ENCODE measurements at regions of chr15 and their contacts with region 1.

Region 1: GRCh38 chr15:94119923-94120775 is 111.2 kb upstream of the MCTP2 start:
- DNase-seq: peak; percentile 23 to 54
- H3K4me3 ChIP-seq: no peak overlapping the region
- H3K27ac ChIP-seq: no peak overlapping the region
- H3K4me1 ChIP-seq: peaks cover 0 to 5% (median 2%) of the 10 kb centered on the region in 4 experiments; a peak in 4 of 7 replicates
- H3K27me3 ChIP-seq: no peaks in the 10 kb centered on the region
- CTCF ChIP-seq: peak; percentile 23 to 100 (median 98)
- EP300 ChIP-seq: no peak
- POLR2A ChIP-seq: no peak
- RAD21 ChIP-seq: peak; percentile 100

Region 2: GRCh38 chr15:93030430-93031105 is 1089.6 kb before region 1 on chr15:
- CTCF ChIA-PET with region 1: interaction called, 77 read pairs
- POLR2A ChIA-PET with region 1: no interaction called
- DNase-seq: peak; percentile 56 to 90
- H3K4me3 ChIP-seq: no peak overlapping the region
- H3K27ac ChIP-seq: no peak overlapping the region
- H3K4me1 ChIP-seq: peaks cover 0 to 3% (median 0%) of the 10 kb centered on the region in 4 experiments; a peak in 3 of 7 replicates
- H3K27me3 ChIP-seq: no peaks in the 10 kb centered on the region
- CTCF ChIP-seq: peak; percentile 84 to 91 (median 85)
- EP300 ChIP-seq: no peak
- POLR2A ChIP-seq: no peak
- RAD21 ChIP-seq: peak; percentile 97

Region 3: DNA sequence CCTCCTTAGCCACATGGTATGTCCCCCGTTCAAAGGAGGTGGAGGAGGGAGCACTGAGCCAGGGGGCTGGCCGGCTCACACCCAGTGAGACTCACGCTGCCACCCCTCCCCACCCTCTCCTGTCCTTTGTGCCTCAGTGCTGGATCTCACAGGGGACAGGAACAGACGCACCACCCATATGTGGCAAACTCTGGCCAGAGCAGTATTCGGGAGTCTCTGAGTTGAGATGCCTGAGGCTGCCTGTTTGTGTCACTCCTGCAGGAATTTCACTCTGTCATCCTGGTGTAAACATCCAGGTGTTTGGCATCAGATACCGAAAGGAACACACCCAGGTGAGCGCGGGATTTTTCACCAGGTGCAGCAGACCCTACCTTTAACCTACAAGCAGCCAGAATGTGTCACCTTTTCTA is 1056.9 kb before region 1 on chr15:
- CTCF ChIA-PET with region 1: interaction called, 12 read pairs
- POLR2A ChIA-PET with region 1: no interaction called
- DNase-seq: no peak
- H3K4me3 ChIP-seq: no peak overlapping the region
- H3K27ac ChIP-seq: peak overlapping the region; percentile 69
- H3K4me1 ChIP-seq: peaks cover 23 to 63% (median 47%) of the 10 kb centered on the region in 4 experiments
- H3K27me3 ChIP-seq: no peaks in the 10 kb centered on the region
- CTCF ChIP-seq: no peak
- EP300 ChIP-seq: no peak
- POLR2A ChIP-seq: no peak
- RAD21 ChIP-seq: no peak

Region 4: DNA sequence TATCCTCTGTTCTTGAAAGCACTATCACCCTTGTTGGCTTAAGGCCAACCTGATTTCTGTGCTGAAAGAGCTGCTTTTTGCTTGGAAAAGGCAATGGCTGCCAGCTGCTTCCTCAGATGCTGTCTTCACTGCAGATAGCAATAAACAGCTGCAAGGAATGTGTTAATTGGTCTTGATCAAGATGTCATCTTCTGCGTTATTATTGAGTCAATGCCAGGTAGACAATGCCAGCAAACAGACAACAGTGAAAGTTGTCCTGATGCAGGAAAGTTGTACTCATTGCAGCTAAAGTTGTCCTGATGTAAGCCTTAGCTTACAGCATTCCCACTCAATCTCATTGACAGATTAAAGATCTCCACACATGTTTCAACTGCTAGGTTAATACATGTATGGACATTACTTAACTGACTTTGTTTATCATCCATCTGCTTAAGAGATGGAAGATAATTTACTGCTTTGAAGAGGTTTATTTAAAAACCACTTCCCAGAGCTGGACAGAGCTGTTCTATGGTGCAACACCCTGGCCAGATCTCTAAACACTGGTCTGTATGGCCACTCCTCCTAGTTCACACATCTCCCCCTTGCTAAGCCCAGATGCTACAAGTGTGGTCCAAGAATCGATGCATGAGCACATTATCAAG is 139.8 kb before region 1 on chr15:
- CTCF ChIA-PET with region 1: interaction called, 18 read pairs
- POLR2A ChIA-PET with region 1: no interaction called
- DNase-seq: no peak
- H3K4me3 ChIP-seq: no peak overlapping the region
- H3K27ac ChIP-seq: no peak overlapping the region
- H3K4me1 ChIP-seq: no peaks in the 10 kb centered on the region
- H3K27me3 ChIP-seq: no peaks in the 10 kb centered on the region
- CTCF ChIP-seq: no peak
- EP300 ChIP-seq: no peak
- POLR2A ChIP-seq: no peak
- RAD21 ChIP-seq: no peak

Region 5: DNA sequence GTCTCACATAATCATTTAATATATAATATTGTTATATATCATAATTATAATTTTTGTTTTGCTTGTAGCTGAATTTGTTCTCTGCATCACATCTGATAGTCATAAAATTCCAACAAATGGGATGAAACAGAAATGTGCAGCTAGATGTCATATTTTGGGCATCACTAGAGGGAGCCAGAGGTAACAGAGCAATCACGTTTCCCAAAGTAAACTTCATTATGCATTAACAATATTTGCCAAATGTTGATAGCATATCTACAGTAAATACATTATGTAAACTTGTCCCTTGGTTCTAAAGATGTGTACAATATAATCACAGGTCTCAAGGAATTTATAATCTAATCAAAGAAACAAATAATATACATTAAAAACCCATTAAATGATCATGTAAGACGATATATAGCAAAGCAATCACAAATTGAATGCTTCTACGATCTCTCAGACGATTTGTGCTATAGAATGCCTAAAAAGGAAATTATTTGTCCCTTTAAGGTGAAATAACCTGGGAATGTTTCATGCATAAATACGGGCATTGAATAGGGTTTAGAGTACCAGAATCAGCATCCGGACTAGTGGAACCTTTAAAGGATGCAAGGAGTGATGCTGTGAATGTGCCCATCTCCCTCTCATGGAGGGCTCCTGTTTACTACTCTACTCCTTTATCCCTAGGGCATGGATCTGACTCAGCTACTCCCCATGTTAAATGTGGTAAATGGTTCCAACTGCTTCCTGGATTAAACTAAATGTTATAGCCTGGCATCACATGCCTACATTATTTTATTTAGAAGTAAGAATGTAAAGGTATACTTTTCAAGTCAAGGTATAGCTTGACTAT is 122.8 kb before region 1 on chr15:
- CTCF ChIA-PET with region 1: interaction called, 52 read pairs
- POLR2A ChIA-PET with region 1: no interaction called
- DNase-seq: no peak
- H3K4me3 ChIP-seq: no peak overlapping the region
- H3K27ac ChIP-seq: no peak overlapping the region
- H3K4me1 ChIP-seq: no peaks in the 10 kb centered on the region
- H3K27me3 ChIP-seq: no peaks in the 10 kb centered on the region
- CTCF ChIP-seq: peak in 2 of 3 experiments; percentile 55 to 64; a peak in 2 of 4 replicates
- EP300 ChIP-seq: no peak
- POLR2A ChIP-seq: no peak
- RAD21 ChIP-seq: peak; percentile 61 to 66

Region 6: GRCh38 chr15:94135486-94136145 is 15.5 kb after region 1 on chr15:
- CTCF ChIA-PET with region 1: interaction called, 13 read pairs
- POLR2A ChIA-PET with region 1: no interaction called
- DNase-seq: no peak
- H3K4me3 ChIP-seq: no peak overlapping the region
- H3K27ac ChIP-seq: no peak overlapping the region
- H3K4me1 ChIP-seq: no peaks in the 10 kb centered on the region
- H3K27me3 ChIP-seq: no peaks in the 10 kb centered on the region
- CTCF ChIP-seq: peak in 2 of 3 experiments; percentile 27 to 36; a peak in 2 of 4 replicates
- EP300 ChIP-seq: no peak
- POLR2A ChIP-seq: no peak
- RAD21 ChIP-seq: peak; percentile 59 to 72